Endothelial cell of umbilical vein (primary cell): ENCODE measurements at regions of chr14 and their contacts with region 1.

Region 1: DNA sequence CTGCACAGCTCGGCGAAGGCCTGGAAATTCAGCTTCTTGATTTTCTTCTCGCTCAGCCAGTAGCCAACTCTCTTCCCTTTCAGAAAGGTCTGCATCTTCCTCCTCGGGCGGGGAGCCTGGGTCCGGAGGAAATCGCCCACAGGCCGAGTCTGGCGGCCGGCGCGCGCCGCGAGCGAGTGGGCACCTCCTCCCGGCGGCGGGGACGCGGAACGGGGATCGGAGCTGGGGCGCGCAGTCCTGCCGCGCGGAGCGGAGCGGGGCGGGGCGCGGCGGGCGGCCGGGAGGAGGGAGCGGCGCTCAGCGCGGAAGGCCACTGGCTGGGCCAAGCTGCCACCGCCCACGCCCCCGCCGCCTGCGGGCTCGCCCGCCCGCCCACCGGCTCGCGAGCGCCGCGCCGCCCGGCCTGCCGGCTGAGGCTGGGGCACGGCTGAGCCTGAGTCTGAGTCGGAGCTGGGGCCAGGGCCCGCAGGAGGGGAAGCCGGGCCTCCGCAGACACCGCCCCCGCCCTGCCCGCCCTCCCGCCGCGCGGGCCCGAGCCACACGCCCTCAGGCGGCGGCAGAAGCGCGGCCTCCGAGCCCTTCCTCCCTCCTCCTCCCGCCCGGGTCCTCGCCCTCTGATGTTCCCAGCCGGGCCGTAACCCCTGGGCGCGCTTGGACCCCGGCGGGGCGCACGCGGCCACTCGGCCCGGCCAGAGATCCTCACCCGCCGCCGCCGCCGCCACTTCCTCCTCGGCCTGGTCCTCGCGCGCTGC is 480 bp downstream of the ITPK1 start:
- DNase-seq: peak; percentile 83
- H3K4me3 ChIP-seq: peak overlapping the region; percentile 43 to 62 (median 59)
- H3K27ac ChIP-seq: no peak overlapping the region
- H3K4me1 ChIP-seq: peaks cover 12% of the 10 kb centered on the region
- H3K27me3 ChIP-seq: no peaks in the 10 kb centered on the region
- CTCF ChIP-seq: no peak
- POLR2A ChIP-seq: no peak

Region 2: GRCh38 chr14:92793709-92794546 is 321.3 kb before region 1 on chr14 and contains the start of gene GOLGA5:
- CTCF ChIA-PET with region 1: no interaction called
- POLR2A ChIA-PET with region 1: no interaction called
- dilution Hi-C with region 1: no loop called
- intact Hi-C with region 1: loop called (anchors 5 kb)
- DNase-seq: peak; percentile 99
- H3K4me3 ChIP-seq: peak within 1 kb of the TSS; percentile 52 to 75 (median 75)
- H3K27ac ChIP-seq: peak within 1 kb of the TSS; percentile 54
- H3K4me1 ChIP-seq: peaks cover 9% of the 10 kb centered on the region
- H3K27me3 ChIP-seq: no peaks in the 10 kb centered on the region
- CTCF ChIP-seq: no peak
- POLR2A ChIP-seq: peak; percentile 85
- total RNA-seq, gene GOLGA5: 28.9 and 29.3 TPM in 2 replicates

Region 3: GRCh38 chr14:92973261-92973797 is 141.9 kb before region 1 on chr14:
- CTCF ChIA-PET with region 1: no interaction called
- POLR2A ChIA-PET with region 1: no interaction called
- dilution Hi-C with region 1: no loop called
- intact Hi-C with region 1: loop called (anchors 5 kb)
- DNase-seq: peak; percentile 17
- H3K4me3 ChIP-seq: no peak overlapping the region
- H3K27ac ChIP-seq: no peak overlapping the region
- H3K4me1 ChIP-seq: no peaks in the 10 kb centered on the region
- H3K27me3 ChIP-seq: no peaks in the 10 kb centered on the region
- CTCF ChIP-seq: peak; percentile 50 to 55
- POLR2A ChIP-seq: no peak

Region 4: GRCh38 chr14:93096691-93097322 is 18.4 kb before region 1 on chr14:
- CTCF ChIA-PET with region 1: interaction called, 21 read pairs
- POLR2A ChIA-PET with region 1: no interaction called
- dilution Hi-C with region 1: no loop called
- intact Hi-C with region 1: no loop called
- DNase-seq: no peak
- H3K4me3 ChIP-seq: no peak overlapping the region
- H3K27ac ChIP-seq: no peak overlapping the region
- H3K4me1 ChIP-seq: no peaks in the 10 kb centered on the region
- H3K27me3 ChIP-seq: no peaks in the 10 kb centered on the region
- CTCF ChIP-seq: no peak
- POLR2A ChIP-seq: no peak

Region 5: GRCh38 chr14:93173943-93174395 is 58.7 kb after region 1 on chr14:
- CTCF ChIA-PET with region 1: interaction called, 14 read pairs
- POLR2A ChIA-PET with region 1: no interaction called
- dilution Hi-C with region 1: no loop called
- intact Hi-C with region 1: loop called (anchors 1 kb)
- DNase-seq: no peak
- H3K4me3 ChIP-seq: no peak overlapping the region
- H3K27ac ChIP-seq: no peak overlapping the region
- H3K4me1 ChIP-seq: no peaks in the 10 kb centered on the region
- H3K27me3 ChIP-seq: no peaks in the 10 kb centered on the region
- CTCF ChIP-seq: no peak
- POLR2A ChIP-seq: no peak

Region 6: DNA sequence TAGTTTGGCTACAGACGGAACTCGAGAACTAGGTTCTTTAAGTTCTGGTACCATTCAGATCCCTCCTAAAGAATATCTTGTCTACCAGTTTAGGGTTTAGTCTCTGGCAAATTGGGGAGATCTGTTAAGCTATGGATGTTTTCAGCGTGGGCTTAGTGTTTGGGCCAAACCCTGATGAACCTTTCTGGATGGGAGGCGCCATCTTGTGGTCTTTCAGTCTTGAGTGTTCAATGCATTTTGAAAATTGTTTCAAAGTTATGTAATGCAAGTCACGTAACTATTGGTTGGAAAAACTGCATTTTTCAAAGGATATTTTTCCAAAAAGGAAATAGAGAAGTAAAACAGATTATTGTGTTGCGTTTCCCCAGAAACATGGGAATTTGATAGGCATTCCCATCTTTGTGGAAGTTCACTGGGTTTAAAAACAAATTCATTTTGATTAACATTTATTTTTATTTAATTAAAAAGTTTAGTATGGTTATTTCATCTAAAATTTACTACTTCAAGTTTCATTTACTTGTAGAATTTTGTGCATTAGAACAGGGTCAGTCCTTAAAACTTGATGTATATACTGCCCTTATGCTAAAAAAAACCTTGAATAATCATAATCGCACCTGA is 504.0 kb after region 1 on chr14:
- CTCF ChIA-PET with region 1: interaction called, 3 read pairs
- POLR2A ChIA-PET with region 1: no interaction called
- dilution Hi-C with region 1: no loop called
- intact Hi-C with region 1: loop called (anchors 5 kb)
- DNase-seq: peak; percentile 43
- H3K4me3 ChIP-seq: no peak overlapping the region
- H3K27ac ChIP-seq: no peak overlapping the region
- H3K4me1 ChIP-seq: no peaks in the 10 kb centered on the region
- H3K27me3 ChIP-seq: no peaks in the 10 kb centered on the region
- CTCF ChIP-seq: peak; percentile 31 to 43
- POLR2A ChIP-seq: no peak